PC-9 (cell line): ENCODE measurements at regions of chr2 and their contacts with region 1.

Region 1: GRCh38 chr2:101983928-101984327 is 7.8 kb upstream of the IL1R2 start:
- DNase-seq: no peak
- H3K4me3 ChIP-seq: peak overlapping the region; percentile 6; the same call in 1 of the 2 replicates
- H3K27ac ChIP-seq: peak overlapping the region; percentile 93
- H3K4me1 ChIP-seq: peaks cover 60% of the 10 kb centered on the region
- H3K27me3 ChIP-seq: no peaks in the 10 kb centered on the region
- CTCF ChIP-seq: peak; percentile 48

Region 2: GRCh38 chr2:101883863-101884262 is 100.1 kb before region 1 on chr2:
- CTCF ChIA-PET with region 1: interaction called, 3 read pairs
- POLR2A ChIA-PET with region 1: no interaction called
- intact Hi-C with region 1: loop called (anchors 5 kb)
- DNase-seq: peak; percentile 7 to 41
- H3K4me3 ChIP-seq: no peak overlapping the region
- H3K27ac ChIP-seq: no peak overlapping the region
- H3K4me1 ChIP-seq: peaks cover 9% of the 10 kb centered on the region; the same call in 1 of the 2 replicates
- H3K27me3 ChIP-seq: no peaks in the 10 kb centered on the region
- CTCF ChIP-seq: peak; percentile 74

Region 3: GRCh38 chr2:101972621-101973434 is 11.1 kb before region 1 on chr2:
- CTCF ChIA-PET with region 1: no interaction called
- POLR2A ChIA-PET with region 1: no interaction called
- intact Hi-C with region 1: loop called (anchors 1 kb)
- DNase-seq: peak; percentile 25 to 67
- H3K4me3 ChIP-seq: no peak overlapping the region
- H3K27ac ChIP-seq: peak overlapping the region; percentile 29
- H3K4me1 ChIP-seq: peaks cover 17% of the 10 kb centered on the region
- H3K27me3 ChIP-seq: no peaks in the 10 kb centered on the region
- CTCF ChIP-seq: no peak

Region 4: GRCh38 chr2:101998896-101999789 is 15.2 kb after region 1 on chr2:
- CTCF ChIA-PET with region 1: no interaction called
- POLR2A ChIA-PET with region 1: no interaction called
- intact Hi-C with region 1: loop called (anchors 1 kb)
- DNase-seq: peak in 1 of 2 experiments; percentile 82
- H3K4me3 ChIP-seq: no peak overlapping the region
- H3K27ac ChIP-seq: peak overlapping the region; percentile 86
- H3K4me1 ChIP-seq: peaks cover 42% of the 10 kb centered on the region
- H3K27me3 ChIP-seq: no peaks in the 10 kb centered on the region
- CTCF ChIP-seq: no peak

Region 5: DNA sequence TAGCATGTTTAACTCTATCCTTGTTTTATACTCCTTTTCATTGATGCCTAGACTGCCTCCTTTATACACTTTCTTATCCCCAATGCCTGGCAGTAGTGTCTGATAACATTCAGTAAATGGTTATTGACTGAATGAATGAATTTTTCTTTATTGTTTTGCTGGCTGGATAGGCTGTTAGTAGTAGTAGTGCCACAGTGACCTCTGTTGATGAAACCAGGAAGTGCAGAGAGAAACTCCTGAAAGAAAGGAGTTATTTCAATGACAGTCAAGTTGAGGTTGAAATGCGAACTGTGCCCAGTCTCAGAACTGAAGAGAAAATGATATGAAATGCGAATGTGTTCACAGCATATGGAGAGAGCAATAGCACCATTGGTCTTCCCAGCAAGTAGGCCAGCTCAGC is 608.7 kb after region 1 on chr2:
- CTCF ChIA-PET with region 1: no interaction called
- POLR2A ChIA-PET with region 1: no interaction called
- intact Hi-C with region 1: no loop called
- DNase-seq: peak in 1 of 2 experiments; percentile 21
- H3K4me3 ChIP-seq: no peak overlapping the region
- H3K27ac ChIP-seq: no peak overlapping the region
- H3K4me1 ChIP-seq: peaks cover 32% of the 10 kb centered on the region
- H3K27me3 ChIP-seq: no peaks in the 10 kb centered on the region
- CTCF ChIP-seq: peak; percentile 71